HCT116 (cell line): ENCODE measurements at regions of chr21 and their contacts with region 1.

Region 1: DNA sequence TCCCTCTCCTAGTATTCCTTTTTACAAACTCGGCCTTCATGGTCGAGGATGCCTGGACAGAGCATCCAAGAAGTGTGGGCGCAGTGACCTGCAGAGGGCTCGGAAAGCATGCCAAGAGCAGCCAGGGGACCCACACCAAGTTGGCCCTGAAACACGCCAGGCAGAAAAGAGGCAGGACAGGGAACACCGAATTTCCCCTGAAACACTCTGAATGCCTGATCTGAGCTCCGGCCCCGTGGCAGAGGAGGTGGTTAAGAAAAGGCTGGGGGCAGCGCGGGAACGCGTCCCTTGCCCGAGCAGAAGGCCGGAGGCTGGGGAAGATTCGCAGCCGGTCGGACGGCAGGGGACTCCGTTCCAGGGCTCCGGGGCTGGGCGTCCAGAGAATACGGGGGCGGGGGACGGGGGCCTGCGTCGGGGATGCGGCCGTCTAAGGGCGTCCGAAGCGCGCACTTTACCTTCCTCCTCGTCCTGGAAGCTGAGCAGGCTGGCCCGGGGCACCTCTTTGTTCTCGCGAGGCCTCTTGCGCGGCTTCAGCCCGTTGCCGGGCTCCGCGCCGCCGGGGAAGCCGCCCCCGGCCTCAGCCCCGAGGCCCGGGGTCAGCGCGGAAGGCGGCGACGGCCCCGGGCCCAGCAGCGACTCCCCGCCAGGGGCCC is 558 bp downstream of the PAXBP1 start:
- DNase-seq: no peak
- ATAC-seq: peak; percentile 56
- H3K4me3 ChIP-seq: peak overlapping the region; percentile 68 to 83
- H3K27ac ChIP-seq: peak overlapping the region; percentile 96
- H3K4me1 ChIP-seq: peaks cover 5 to 22% of the 10 kb centered on the region in 2 experiments; a peak in 3 of 4 replicates
- H3K27me3 ChIP-seq: no peaks in the 10 kb centered on the region
- CTCF ChIP-seq: no peak
- POLR2A ChIP-seq: no peak
- RAD21 ChIP-seq: no peak

Region 2: GRCh38 chr21:32727687-32728455 is 43.1 kb before region 1 on chr21 and contains the start of gene SYNJ1:
- CTCF ChIA-PET with region 1: no interaction called
- POLR2A ChIA-PET with region 1: interaction called, 3 read pairs
- RAD21 ChIA-PET with region 1: no interaction called
- intact Hi-C with region 1: loop called (anchors 5 kb)
- DNase-seq: peak; percentile 73
- ATAC-seq: peak; percentile 97
- H3K4me3 ChIP-seq: peak within 1 kb of the TSS; percentile 72 to 78
- H3K27ac ChIP-seq: peak within 1 kb of the TSS; percentile 73
- H3K4me1 ChIP-seq: peaks cover 8 to 16% of the 10 kb centered on the region in 2 experiments
- H3K27me3 ChIP-seq: no peaks in the 10 kb centered on the region
- CTCF ChIP-seq: no peak
- POLR2A ChIP-seq: peak; percentile 57
- RAD21 ChIP-seq: no peak
- total RNA-seq, gene SYNJ1: 7.2 TPM

Region 3: GRCh38 chr21:32757804-32758203 is 13.2 kb before region 1 on chr21:
- CTCF ChIA-PET with region 1: interaction called, 4 read pairs
- POLR2A ChIA-PET with region 1: interaction called, 13 read pairs
- RAD21 ChIA-PET with region 1: no interaction called
- intact Hi-C with region 1: no loop called
- DNase-seq: no peak
- ATAC-seq: no peak
- H3K4me3 ChIP-seq: no peak overlapping the region
- H3K27ac ChIP-seq: no peak overlapping the region
- H3K4me1 ChIP-seq: peaks cover 0 to 4% of the 10 kb centered on the region in 2 experiments; a peak in 2 of 4 replicates
- H3K27me3 ChIP-seq: no peaks in the 10 kb centered on the region
- CTCF ChIP-seq: no peak
- POLR2A ChIP-seq: no peak
- RAD21 ChIP-seq: no peak